PC-9 (cell line): ENCODE measurements at regions of chr6 and their contacts with region 1.

Region 1: DNA sequence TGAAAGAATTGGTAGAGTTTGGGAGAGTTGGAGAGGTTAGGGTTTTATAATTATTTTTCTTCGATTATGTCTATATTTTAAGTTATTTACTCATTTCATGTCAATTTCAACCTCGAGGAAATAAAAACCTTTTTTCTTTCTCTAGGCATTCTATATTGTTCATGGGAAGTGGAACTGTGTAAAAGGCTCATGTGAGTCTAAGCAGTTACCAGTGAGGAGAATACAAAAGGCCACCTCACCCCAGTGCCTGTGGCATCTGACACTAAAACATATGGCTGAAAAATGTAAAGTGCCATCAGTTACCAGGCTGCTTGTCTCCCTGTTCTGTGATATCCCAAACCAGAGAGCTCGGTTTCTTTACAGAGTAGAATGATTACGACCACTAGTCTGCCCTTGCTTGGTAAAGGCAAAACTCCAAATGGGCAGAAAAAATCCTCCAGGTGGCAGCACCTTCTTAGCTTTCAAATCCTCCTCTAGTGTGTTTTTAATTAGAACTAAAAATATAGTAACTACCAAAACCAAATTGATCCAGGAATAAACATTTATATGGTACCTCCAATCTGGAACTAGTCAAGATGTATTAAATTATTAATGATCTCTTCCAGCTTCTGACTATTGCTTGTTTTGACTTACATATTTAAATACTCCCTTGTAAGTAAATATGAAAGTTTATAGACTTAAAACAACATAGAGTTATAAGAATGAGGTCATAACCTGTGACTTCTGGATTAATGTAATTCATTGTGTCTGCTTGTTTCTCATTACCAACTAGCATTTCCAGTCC is 122.6 kb upstream of the MCHR2 start:
- DNase-seq: peak; percentile 53 to 59
- H3K4me3 ChIP-seq: no peak overlapping the region
- H3K27ac ChIP-seq: no peak overlapping the region
- H3K4me1 ChIP-seq: peaks cover 5% of the 10 kb centered on the region
- H3K27me3 ChIP-seq: no peaks in the 10 kb centered on the region
- CTCF ChIP-seq: peak; percentile 88

Region 2: DNA sequence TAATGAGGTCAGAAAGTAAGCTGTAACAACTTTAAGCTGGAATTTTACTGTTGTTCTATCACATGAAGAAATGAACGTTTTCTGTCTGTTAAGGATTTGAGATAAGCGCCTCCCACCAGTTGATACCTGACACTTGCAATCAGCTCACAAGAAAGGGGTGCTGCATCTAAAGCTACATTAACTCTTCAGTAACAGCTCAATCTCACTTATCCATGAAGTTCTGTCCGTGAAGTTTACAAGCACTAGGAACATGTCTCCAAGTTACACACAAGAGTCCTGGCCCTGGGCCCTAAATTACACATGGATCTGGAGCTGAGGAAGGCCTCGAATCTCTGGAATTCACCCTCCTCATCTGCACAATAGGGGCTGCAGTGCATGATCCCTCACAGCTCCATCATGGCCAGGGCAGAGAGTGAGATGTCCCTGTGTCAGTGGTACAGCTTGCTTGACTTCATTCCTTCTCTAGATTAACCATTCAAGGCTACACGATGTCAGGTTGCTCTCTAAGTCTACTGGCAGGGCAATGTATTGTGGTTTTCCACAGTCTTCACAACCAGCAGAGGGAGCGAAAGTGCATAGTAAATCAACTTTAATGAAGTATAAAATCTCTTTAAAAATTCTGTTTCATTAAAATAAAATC is 59.8 kb after region 1 on chr6:
- CTCF ChIA-PET with region 1: no interaction called
- POLR2A ChIA-PET with region 1: no interaction called
- intact Hi-C with region 1: loop called (anchors 2 kb)
- DNase-seq: peak; percentile 42 to 70
- H3K4me3 ChIP-seq: 0 out of 2 replicates have a peak overlapping the region, but pooled peaks have one; percentile 8
- H3K27ac ChIP-seq: peak overlapping the region; percentile 74
- H3K4me1 ChIP-seq: peaks cover 24% of the 10 kb centered on the region
- H3K27me3 ChIP-seq: no peaks in the 10 kb centered on the region
- CTCF ChIP-seq: peak; percentile 67

Region 3: DNA sequence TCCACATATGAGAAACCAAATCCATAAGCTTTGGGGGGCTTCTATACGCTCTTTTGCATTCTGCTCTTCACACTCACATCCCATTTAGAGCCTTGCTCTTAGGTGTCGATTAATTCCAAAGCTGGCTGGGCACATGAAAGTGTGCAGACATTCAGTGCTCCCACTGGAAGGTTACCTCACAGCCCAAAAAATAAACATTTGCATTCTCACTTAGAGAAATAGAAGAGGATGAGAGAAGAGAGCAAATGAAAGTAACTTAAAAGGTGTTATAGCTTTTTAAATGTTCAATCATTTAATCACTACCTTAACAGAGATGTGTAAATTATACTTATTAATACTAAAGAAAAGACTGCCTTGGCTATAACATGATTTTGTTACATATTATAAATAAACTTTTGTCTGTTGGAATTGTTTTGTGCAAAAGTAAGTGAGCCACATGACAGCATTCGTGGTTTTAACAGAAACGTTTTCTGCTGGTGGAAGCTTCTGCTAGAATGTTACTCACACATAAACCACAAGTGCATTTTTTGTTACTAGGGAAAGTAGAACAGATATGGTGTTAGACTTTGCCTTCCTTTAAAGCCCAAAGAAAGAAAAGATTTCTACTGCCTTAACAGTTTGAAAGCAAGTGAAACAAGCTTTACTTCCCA is 231.4 kb after region 1 on chr6:
- CTCF ChIA-PET with region 1: no interaction called
- POLR2A ChIA-PET with region 1: no interaction called
- intact Hi-C with region 1: loop called (anchors 1 kb)
- DNase-seq: no peak
- H3K4me3 ChIP-seq: no peak overlapping the region
- H3K27ac ChIP-seq: no peak overlapping the region
- H3K4me1 ChIP-seq: no peaks in the 10 kb centered on the region
- H3K27me3 ChIP-seq: no peaks in the 10 kb centered on the region
- CTCF ChIP-seq: no peak

Region 4: DNA sequence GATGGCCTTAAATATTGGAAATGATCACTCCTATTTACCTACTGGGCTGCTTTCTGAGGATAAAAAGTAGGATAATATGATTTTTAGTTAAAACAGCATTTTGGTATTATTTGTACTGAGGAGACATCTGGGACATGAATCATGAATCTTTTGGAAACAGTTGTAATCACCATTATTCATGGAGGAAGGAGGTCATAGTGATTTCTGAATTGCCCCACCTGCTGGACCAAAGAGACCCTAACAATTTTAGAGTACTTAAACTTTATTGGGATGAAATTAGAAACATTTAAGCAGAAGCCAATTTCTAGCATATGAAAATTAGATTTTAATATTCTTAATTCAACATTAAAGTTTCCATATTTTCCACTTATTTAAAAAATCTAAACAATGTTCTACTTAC is 456.6 kb after region 1 on chr6:
- CTCF ChIA-PET with region 1: interaction called, 6 read pairs
- POLR2A ChIA-PET with region 1: no interaction called
- intact Hi-C with region 1: loop called (anchors 5 kb)
- DNase-seq: no peak
- H3K4me3 ChIP-seq: no peak overlapping the region
- H3K27ac ChIP-seq: no peak overlapping the region
- H3K4me1 ChIP-seq: no peaks in the 10 kb centered on the region
- H3K27me3 ChIP-seq: no peaks in the 10 kb centered on the region
- CTCF ChIP-seq: peak; percentile 53

Region 5: DNA sequence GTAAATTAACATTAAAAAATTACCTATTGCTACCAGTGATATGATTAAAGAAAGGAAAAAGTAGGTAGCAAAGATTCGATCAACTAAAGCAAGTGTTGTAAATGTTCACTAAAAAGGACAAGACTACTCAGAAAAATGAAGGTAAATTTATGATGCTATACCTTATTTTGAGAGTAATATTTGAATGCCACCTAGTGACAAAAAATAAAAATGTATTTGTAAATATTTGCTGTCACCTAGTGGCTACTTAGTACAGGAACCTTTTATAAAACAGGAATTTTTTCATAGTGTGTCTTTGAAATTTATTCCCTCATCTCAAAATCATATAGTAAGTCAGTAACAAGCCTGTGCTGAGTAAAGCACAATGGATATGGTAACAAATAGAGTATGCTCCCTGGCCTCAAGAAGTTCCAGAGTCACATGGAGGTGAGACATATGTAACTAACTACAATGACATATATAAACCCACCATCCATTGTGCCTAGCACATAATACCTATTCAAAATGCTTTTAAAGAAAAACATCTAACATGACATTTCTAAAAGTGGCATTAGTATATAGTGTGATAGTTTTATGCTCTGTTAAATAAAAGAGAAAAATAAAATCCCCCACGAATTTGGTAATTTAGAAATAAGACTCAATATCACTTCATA is 541.2 kb after region 1 on chr6:
- CTCF ChIA-PET with region 1: no interaction called
- POLR2A ChIA-PET with region 1: no interaction called
- intact Hi-C with region 1: loop called (anchors 1 kb)
- DNase-seq: peak in 1 of 2 experiments; percentile 56
- H3K4me3 ChIP-seq: no peak overlapping the region
- H3K27ac ChIP-seq: no peak overlapping the region
- H3K4me1 ChIP-seq: peaks cover 2% of the 10 kb centered on the region
- H3K27me3 ChIP-seq: no peaks in the 10 kb centered on the region
- CTCF ChIP-seq: peak; percentile 83

Region 6: DNA sequence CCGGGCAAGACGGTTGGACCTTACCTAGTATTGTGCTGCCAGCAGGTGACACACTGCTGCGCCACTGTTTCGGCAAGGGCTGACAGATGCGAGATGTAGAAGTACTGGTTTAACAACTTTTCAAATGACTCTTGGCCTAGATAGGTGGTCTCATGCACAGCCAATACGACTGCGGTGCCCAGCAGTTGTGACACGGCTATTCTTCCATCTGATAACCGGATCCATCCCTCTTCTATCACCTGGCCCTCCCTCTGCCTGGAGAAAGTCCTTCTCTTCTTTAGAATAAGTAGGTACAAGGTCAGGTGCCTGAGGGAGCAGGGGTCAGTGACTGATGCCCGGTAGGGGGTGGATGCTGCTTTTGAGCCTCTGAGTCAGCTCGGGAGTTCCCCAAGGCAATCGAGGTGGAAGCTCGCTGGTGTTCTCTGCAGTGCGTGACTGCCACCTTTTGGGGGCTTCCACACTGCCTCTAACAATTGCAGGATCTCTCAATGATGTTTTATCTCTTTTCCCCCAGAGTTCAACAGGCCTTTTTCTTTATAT is 1110.1 kb after region 1 on chr6:
- CTCF ChIA-PET with region 1: no interaction called
- POLR2A ChIA-PET with region 1: no interaction called
- intact Hi-C with region 1: loop called (anchors 10 kb)
- DNase-seq: peak; percentile 67 to 85
- H3K4me3 ChIP-seq: peak overlapping the region; percentile 13; the same call in 1 of the 2 replicates
- H3K27ac ChIP-seq: peak overlapping the region; percentile 66
- H3K4me1 ChIP-seq: peaks cover 17% of the 10 kb centered on the region
- H3K27me3 ChIP-seq: no peaks in the 10 kb centered on the region
- CTCF ChIP-seq: peak; percentile 85